SK-N-SH (cell line): ENCODE measurements at regions of chr2 and their contacts with region 1.

Region 1: DNA sequence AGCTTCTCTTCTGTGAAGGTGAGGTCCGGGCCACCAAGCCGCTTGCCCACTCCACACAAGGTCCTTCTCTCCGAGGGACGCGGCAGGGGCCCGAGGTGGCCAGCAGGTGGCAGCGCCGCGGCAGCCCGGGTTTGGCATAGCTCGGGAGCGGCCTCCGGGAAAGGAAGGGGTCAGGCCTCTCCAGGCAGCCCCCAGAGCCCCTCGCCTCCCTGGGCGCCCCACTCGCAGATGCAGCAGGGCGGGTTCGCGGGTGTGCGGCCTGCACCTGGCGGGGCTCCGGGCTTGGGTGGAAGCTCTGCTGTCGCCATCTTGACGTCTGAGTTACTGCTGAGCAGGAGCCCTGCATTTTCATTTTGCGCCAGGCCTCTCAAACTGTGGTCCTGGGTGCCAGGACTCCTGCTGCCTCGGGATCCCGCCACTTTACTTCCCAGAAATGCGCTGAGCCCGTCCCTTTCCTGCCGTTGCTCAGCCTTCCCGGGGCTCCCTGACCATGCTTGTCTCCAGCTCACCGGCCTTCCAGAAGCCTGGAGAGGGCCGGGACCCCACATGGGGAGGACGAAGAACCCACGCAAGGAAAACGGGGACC is 18.6 kb upstream of the NCL start:
- DNase-seq: peak; percentile 96
- H3K4me3 ChIP-seq: no peak overlapping the region; a peak in 1 of 4 replicates
- H3K27ac ChIP-seq: no peak overlapping the region
- H3K4me1 ChIP-seq: no peaks in the 10 kb centered on the region; a peak in 1 of 4 replicates
- H3K27me3 ChIP-seq: no peaks in the 10 kb centered on the region
- CTCF ChIP-seq: peak; percentile 72
- EP300 ChIP-seq: no peak
- RAD21 ChIP-seq: peak; percentile 62

Region 2: GRCh38 chr2:231117922-231118613 is 364.8 kb before region 1 on chr2:
- CTCF ChIA-PET with region 1: no interaction called
- POLR2A ChIA-PET with region 1: no interaction called
- DNase-seq: no peak
- H3K4me3 ChIP-seq: no peak overlapping the region
- H3K27ac ChIP-seq: no peak overlapping the region
- H3K4me1 ChIP-seq: peaks cover 4 to 8% of the 10 kb centered on the region in 2 experiments; a peak in 2 of 4 replicates
- H3K27me3 ChIP-seq: no peaks in the 10 kb centered on the region
- CTCF ChIP-seq: no peak
- EP300 ChIP-seq: no peak
- RAD21 ChIP-seq: no peak

Region 3: DNA sequence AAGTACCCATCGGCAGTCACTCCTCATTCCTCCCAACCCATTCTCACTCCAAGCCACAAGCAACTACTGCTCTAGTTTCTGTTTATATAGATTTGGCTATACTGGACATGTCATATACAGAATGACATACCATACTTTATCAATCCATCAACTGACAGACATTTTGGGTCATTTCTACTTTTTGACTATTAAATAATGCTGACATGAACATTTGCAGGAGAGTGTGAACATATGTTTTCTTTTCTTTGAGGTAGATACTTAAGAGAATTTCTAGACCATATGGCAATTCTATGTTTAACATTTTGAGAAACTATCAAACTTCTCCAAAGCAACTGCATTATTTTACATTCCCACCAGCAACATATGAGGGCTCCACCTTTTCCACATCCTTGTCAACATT is 14.8 kb after region 1 on chr2:
- CTCF ChIA-PET with region 1: interaction called, 27 read pairs
- POLR2A ChIA-PET with region 1: no interaction called
- DNase-seq: no peak
- H3K4me3 ChIP-seq: no peak overlapping the region
- H3K27ac ChIP-seq: no peak overlapping the region
- H3K4me1 ChIP-seq: no peaks in the 10 kb centered on the region
- H3K27me3 ChIP-seq: no peaks in the 10 kb centered on the region
- CTCF ChIP-seq: no peak
- EP300 ChIP-seq: no peak
- RAD21 ChIP-seq: no peak